PC-9 (cell line): ENCODE measurements at regions of chr5 and their contacts with region 1.

Region 1: GRCh38 chr5:139232147-139232724 is 34.1 kb upstream of the SIL1 start:
- DNase-seq: no peak
- H3K4me3 ChIP-seq: no peak overlapping the region
- H3K27ac ChIP-seq: no peak overlapping the region
- H3K4me1 ChIP-seq: no peaks in the 10 kb centered on the region
- H3K27me3 ChIP-seq: no peaks in the 10 kb centered on the region
- CTCF ChIP-seq: no peak

Region 2: DNA sequence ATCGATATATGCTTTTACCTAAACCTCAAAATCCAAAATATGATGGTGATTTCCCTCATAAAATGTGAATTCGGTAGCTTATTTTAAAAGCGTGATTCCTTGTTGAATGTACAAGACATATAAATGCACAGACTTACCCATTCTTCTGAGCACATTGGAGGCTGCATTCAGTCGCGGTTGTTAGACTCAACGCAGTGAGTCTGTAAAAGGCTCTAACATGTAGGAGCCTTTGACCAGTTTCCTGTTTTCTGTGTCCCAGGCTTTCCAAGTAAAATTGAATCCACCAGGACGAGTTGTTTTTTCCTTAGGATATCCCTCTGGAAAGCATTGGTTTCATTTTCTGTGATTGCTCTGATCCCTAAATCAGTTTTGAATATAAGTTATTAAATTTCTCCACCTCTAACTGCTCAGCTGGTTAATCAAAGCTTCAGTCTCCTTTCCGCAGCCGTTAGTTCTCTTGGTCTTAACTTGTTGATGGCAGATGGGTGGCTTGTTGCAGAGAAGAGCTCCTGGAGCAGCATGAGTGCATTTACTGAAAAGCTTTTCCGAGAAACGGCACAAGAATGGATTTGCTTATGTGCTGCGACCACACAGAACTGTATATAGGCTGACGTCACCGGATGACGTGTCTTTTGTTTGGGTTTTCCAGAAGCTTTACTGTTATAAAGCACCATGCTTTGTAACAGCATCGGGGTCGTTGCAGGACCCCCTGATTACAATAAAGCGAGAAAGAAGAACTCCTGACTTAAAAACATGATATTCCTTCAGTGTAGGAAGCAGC is 357.3 kb before region 1 on chr5 and contains the start of gene LRRTM2:
- CTCF ChIA-PET with region 1: no interaction called
- POLR2A ChIA-PET with region 1: interaction called, 10 read pairs
- intact Hi-C with region 1: no loop called
- DNase-seq: no peak
- H3K4me3 ChIP-seq: no peak within 1 kb of the TSS
- H3K27ac ChIP-seq: no peak within 1 kb of the TSS
- H3K4me1 ChIP-seq: peaks cover 17% of the 10 kb centered on the region
- H3K27me3 ChIP-seq: no peaks in the 10 kb centered on the region
- CTCF ChIP-seq: no peak
- total RNA-seq, gene LRRTM2: not detected in 2 replicates

Region 3: DNA sequence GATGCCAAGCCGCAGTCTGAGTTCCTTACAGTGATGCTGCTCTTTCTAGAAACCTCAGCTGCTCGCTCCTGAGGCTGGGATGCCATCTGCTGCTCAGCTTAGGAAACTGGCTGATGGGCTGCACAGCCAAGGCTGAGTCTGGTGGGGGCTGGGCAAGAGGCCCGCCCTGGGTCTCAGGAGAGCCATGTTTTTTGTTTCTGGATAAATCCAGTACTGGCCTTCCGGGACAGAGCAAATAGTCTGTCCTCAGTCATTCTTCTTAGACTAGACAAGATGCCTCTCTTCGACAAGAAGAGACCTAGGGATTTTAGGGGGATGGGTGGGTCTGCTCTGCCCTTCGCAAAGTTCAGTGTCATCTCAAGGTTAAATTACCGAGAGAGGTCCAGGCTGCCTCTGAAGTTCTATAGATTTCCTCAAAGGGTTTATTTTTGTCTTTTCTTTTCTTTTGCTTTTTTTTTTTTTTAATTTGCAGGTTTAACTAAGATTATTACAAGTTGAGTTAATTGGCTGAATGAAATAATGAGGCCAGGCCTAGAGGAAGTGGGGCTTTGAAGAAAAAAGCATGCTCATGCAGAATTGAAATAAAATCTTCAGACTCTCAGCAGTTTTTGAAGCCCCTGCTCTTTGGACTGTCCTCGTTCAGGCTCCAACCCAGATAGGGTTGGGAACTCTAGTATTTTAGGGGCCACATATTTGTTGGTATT is 30.7 kb after region 1 on chr5:
- CTCF ChIA-PET with region 1: interaction called, 10 read pairs
- POLR2A ChIA-PET with region 1: no interaction called
- intact Hi-C with region 1: no loop called
- DNase-seq: peak; percentile 73 to 80
- H3K4me3 ChIP-seq: no peak overlapping the region
- H3K27ac ChIP-seq: no peak overlapping the region
- H3K4me1 ChIP-seq: no peaks in the 10 kb centered on the region
- H3K27me3 ChIP-seq: peaks cover 6% of the 10 kb centered on the region; the same call in 1 of the 2 replicates
- CTCF ChIP-seq: peak; percentile 83